ENCODE measurements at regions of chr18 and their contacts with region 1.

Region 1: DNA sequence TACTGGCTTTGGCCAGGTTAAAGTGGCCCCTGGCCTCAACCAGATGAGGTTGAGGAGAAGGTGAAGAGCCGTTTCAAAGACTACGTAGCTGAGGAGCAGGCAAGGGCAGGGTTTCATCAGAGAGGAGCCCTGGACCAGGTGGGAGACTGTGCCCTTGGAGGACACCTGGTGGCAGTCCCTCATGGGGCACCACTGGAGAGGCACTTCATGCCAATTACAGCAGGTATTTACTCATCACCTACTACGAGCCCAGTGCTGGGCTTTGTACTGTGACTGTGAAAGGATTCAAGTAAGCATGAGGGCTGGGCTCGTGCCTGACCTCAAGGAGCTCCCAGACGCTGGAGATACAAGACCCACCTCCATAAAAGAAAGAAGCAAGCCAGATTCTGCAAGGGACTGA is 37.6 kb downstream of the SMAD7 start:
- DNase-seq: no peak
- H3K4me3 ChIP-seq: no peak overlapping the region
- H3K27ac ChIP-seq: no peak overlapping the region
- H3K4me1 ChIP-seq: no peaks in the 10 kb centered on the region
- H3K27me3 ChIP-seq: no peaks in the 10 kb centered on the region
- CTCF ChIP-seq: peak; percentile 70

Region 2: GRCh38 chr18:48711651-48712486 is 201.3 kb before region 1 on chr18:
- CTCF ChIA-PET with region 1: no interaction called
- POLR2A ChIA-PET with region 1: no interaction called
- intact Hi-C with region 1: loop called (anchors 10 kb)
- DNase-seq: peak in 1 of 2 experiments; percentile 10
- H3K4me3 ChIP-seq: no peak overlapping the region
- H3K27ac ChIP-seq: no peak overlapping the region
- H3K4me1 ChIP-seq: no peaks in the 10 kb centered on the region
- H3K27me3 ChIP-seq: no peaks in the 10 kb centered on the region
- CTCF ChIP-seq: peak; percentile 64

Region 3: GRCh38 chr18:48754993-48755473 is 158.2 kb before region 1 on chr18:
- CTCF ChIA-PET with region 1: no interaction called
- POLR2A ChIA-PET with region 1: no interaction called
- intact Hi-C with region 1: no loop called
- DNase-seq: no peak
- H3K4me3 ChIP-seq: no peak overlapping the region
- H3K27ac ChIP-seq: no peak overlapping the region
- H3K4me1 ChIP-seq: no peaks in the 10 kb centered on the region
- H3K27me3 ChIP-seq: no peaks in the 10 kb centered on the region
- CTCF ChIP-seq: no peak

Region 4: GRCh38 chr18:48777026-48777743 is 136.0 kb before region 1 on chr18:
- CTCF ChIA-PET with region 1: no interaction called
- POLR2A ChIA-PET with region 1: no interaction called
- intact Hi-C with region 1: loop called (anchors 1 kb)
- DNase-seq: peak in 1 of 2 experiments; percentile 58
- H3K4me3 ChIP-seq: no peak overlapping the region
- H3K27ac ChIP-seq: no peak overlapping the region
- H3K4me1 ChIP-seq: no peaks in the 10 kb centered on the region
- H3K27me3 ChIP-seq: no peaks in the 10 kb centered on the region
- CTCF ChIP-seq: peak; percentile 86

Measured in PC-9 (cell line).